ENCODE measurements at regions of chr6 and their contacts with region 1.

Region 1: DNA sequence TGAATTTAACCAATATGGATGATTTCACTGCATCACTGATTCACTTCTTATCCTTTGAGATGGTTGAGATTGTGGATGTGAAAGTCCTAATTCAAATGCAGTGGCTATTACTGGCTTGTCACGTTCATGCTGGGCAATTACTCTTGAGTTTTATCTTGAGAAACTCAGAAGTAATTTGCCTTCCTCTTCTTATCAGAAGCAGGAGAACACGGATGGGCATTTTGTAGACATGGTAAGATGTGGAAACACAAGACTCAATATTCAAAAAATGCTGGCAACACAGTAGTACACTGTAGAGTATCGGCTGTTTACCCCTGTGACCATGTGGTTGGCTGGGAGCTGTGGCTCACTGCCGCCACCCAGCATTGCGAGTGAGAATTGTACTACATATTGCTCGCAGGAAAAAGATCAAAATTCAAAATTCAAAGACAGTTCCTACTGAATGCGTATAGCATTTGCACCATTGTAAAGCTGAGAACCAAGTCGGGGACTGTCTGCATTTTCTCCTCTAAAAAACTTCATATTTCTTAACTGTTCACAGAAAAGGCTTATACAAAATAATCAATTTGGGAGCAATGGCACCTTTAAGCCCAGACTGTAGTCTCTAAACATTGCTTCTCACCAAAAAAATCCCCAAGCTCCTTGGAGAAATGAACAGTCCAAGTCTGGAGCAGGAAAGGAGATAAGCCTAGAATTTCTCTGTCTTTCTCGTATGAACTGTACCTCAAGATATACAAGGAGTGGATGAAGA is 61.9 kb upstream of the ELOVL5 start:
- DNase-seq: peak in 1 of 2 experiments; percentile 37
- H3K4me3 ChIP-seq: no peak overlapping the region
- H3K4me3 Mint-ChIP-seq: no peak overlapping the region
- H3K27ac Mint-ChIP-seq: no peak overlapping the region
- H3K4me1 ChIP-seq: peaks cover 12% of the 10 kb centered on the region
- H3K4me1 Mint-ChIP-seq: no peaks in the 10 kb centered on the region
- H3K27me3 ChIP-seq: no peaks in the 10 kb centered on the region
- H3K27me3 Mint-ChIP-seq: no peaks in the 10 kb centered on the region
- CTCF ChIP-seq: peak; percentile 61 to 76

Region 2: DNA sequence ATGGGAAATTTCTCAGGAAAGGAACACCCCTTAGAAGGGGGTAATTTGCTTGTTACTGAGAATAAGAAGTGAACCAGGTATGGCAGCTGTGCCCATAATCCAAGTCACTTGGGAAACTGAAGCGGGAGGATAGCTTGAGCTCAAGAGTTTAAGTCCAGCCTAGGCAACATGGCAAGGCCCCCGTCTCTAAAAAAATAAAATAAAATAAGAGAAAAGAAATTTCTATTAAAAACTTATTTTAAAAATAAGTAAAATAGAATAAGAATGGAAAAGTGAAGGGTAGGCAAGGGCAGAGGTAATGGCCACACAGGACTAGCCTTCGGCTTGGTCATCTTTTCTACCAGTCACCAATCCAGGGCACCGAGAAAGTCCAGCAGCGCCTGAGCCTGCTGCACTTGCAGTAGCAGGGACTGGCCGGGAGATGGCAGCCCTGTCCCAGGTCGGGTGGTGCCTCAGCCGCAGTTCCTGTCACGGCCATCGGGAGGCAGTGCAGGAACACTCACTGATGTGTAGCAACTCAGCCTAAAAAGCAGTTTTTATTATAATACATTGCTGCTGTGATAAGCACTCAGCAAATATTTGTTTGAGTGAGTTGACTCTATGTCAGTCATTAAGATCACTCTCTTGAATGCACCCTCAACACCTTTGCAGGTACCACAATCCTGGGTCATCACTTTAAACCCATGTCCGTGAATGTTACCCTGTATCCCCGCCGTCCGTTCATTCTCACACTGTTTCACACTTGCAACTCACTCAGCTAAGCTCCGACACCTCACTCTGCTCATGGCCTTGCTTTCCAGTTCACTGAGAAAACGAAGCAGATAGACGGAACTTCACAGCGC is 238.9 kb before region 1 on chr6:
- CTCF ChIA-PET with region 1: interaction called, 3 read pairs
- POLR2A ChIA-PET with region 1: no interaction called
- intact Hi-C with region 1: loop called (anchors 1 kb)
- DNase-seq: peak; percentile 77 to 90
- H3K4me3 ChIP-seq: no peak overlapping the region
- H3K4me3 Mint-ChIP-seq: no peak overlapping the region
- H3K27ac Mint-ChIP-seq: no peak overlapping the region
- H3K4me1 ChIP-seq: peaks cover 6% of the 10 kb centered on the region; the same call in 1 of the 2 replicates
- H3K4me1 Mint-ChIP-seq: no peaks in the 10 kb centered on the region
- H3K27me3 ChIP-seq: no peaks in the 10 kb centered on the region
- H3K27me3 Mint-ChIP-seq: no peaks in the 10 kb centered on the region
- CTCF ChIP-seq: peak; percentile 100

Region 3: GRCh38 chr6:53294095-53294494 is 116.6 kb before region 1 on chr6:
- CTCF ChIA-PET with region 1: no interaction called
- POLR2A ChIA-PET with region 1: no interaction called
- intact Hi-C with region 1: loop called (anchors 2 kb)
- DNase-seq: peak in 1 of 2 experiments; percentile 16
- H3K4me3 ChIP-seq: no peak overlapping the region
- H3K4me3 Mint-ChIP-seq: no peak overlapping the region
- H3K27ac Mint-ChIP-seq: no peak overlapping the region
- H3K4me1 ChIP-seq: no peaks in the 10 kb centered on the region
- H3K4me1 Mint-ChIP-seq: no peaks in the 10 kb centered on the region
- H3K27me3 ChIP-seq: no peaks in the 10 kb centered on the region
- H3K27me3 Mint-ChIP-seq: no peaks in the 10 kb centered on the region
- CTCF ChIP-seq: peak; percentile 47 to 65

Region 4: GRCh38 chr6:53359072-53359842 is 51.4 kb before region 1 on chr6:
- CTCF ChIA-PET with region 1: no interaction called
- POLR2A ChIA-PET with region 1: no interaction called
- intact Hi-C with region 1: loop called (anchors 5 kb)
- DNase-seq: peak; percentile 94 to 97
- H3K4me3 ChIP-seq: peak overlapping the region; percentile 59
- H3K4me3 Mint-ChIP-seq: peak overlapping the region; percentile 78
- H3K27ac Mint-ChIP-seq: peak overlapping the region; percentile 84
- H3K4me1 ChIP-seq: peaks cover 16% of the 10 kb centered on the region
- H3K4me1 Mint-ChIP-seq: peaks cover 15% of the 10 kb centered on the region
- H3K27me3 ChIP-seq: no peaks in the 10 kb centered on the region
- H3K27me3 Mint-ChIP-seq: peaks cover 3% of the 10 kb centered on the region
- CTCF ChIP-seq: no peak

Region 5: DNA sequence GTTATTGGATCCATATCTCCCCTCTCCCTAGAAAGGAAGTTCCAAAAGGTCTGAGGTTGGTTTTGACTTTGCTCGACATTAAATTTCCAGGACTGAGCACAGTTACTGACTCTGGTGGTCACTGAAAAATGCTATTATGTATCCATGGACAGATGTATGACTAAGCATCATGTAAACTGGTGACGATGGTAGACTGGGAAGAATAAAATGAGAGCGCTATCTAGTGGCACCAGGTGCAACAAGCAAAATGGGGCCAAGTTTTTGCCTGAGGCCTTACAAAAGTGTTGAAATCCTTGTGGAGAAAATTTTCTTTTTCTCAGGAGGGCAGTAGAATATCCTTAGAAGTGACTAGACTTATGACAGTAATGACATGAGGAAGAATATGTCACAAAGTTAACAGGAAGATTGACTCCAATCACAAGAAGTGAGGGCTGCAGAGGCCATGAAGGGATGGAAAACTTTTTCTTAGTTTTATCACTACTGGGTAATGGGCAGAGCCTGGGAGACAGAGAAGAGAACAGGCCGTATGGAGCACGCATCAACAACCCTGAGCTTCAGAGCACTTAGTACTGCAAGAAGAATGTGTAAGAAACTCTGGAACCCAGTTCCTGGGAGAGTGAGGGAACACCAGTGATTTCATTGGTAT is 27.0 kb after region 1 on chr6:
- CTCF ChIA-PET with region 1: no interaction called
- POLR2A ChIA-PET with region 1: no interaction called
- intact Hi-C with region 1: loop called (anchors 1 kb)
- DNase-seq: peak; percentile 43 to 64
- H3K4me3 ChIP-seq: no peak overlapping the region
- H3K4me3 Mint-ChIP-seq: no peak overlapping the region
- H3K27ac Mint-ChIP-seq: peak overlapping the region; percentile 30
- H3K4me1 ChIP-seq: 0 out of 2 replicates have a peak, but pooled peaks cover 10% of the 10 kb centered on the region
- H3K4me1 Mint-ChIP-seq: no peaks in the 10 kb centered on the region
- H3K27me3 ChIP-seq: no peaks in the 10 kb centered on the region
- H3K27me3 Mint-ChIP-seq: peaks cover 5% of the 10 kb centered on the region
- CTCF ChIP-seq: peak; percentile 30 to 68

Region 6: DNA sequence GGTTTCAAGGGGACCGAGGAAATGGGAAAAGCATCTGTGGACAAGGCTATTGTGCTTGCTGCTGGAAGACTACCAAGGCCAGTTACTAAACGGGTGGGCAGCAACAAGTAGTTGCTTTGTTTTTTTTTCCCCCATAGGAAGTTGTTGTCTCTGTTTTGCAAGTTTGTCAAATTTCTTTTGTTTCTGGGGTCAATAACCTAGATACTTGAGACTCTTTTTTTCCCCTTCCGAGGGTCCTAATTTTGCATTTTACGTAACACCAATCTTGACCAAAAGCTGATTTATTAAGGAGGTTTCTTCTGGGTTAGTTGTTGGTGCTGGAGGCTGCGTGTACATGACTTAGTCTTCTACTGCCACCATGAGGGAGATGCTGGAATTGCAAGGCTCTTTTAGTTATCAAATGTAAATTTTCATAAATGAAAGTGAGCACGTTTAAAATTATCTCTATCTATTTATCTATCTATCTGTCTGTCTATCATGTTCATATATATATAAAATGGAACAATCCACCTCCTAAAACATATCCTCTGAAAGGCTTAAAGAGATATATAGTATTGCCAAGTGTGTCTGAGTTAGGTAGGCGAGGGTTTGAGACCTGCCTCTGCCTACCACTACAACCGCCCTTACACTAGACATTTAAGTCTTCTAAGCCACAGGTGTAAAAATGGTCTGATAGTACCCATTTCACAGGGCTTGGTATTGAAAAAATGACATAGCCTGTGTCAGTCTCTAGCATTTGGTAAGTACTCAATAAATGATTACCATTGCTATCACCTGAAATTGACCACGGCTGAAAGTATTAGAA is 74.0 kb after region 1 on chr6:
- CTCF ChIA-PET with region 1: interaction called, 3 read pairs
- POLR2A ChIA-PET with region 1: no interaction called
- intact Hi-C with region 1: loop called (anchors 2 kb)
- DNase-seq: peak; percentile 46 to 63
- H3K4me3 ChIP-seq: no peak overlapping the region
- H3K4me3 Mint-ChIP-seq: no peak overlapping the region
- H3K27ac Mint-ChIP-seq: no peak overlapping the region
- H3K4me1 ChIP-seq: peaks cover 8% of the 10 kb centered on the region; the same call in 1 of the 2 replicates
- H3K4me1 Mint-ChIP-seq: peaks cover 12% of the 10 kb centered on the region
- H3K27me3 ChIP-seq: no peaks in the 10 kb centered on the region; the same call in 1 of the 2 replicates
- H3K27me3 Mint-ChIP-seq: no peaks in the 10 kb centered on the region
- CTCF ChIP-seq: peak; percentile 88 to 89